Activated T-helper 1 cell treated with anti-CD3 and anti-CD28 coated beads, Interleukin-12 subunit alpha, Interleukin-12 subunit beta, Interleukin-2, Interleukin-4 antibody, amounts not matched to agents 30 ng/mL and 10 ng/mL and 1 ng/mL, durations not matched to agents 14 hours and 24 hours and 36 hours (primary cell): ENCODE measurements at regions of chr6 and their contacts with region 1.

Region 1: DNA sequence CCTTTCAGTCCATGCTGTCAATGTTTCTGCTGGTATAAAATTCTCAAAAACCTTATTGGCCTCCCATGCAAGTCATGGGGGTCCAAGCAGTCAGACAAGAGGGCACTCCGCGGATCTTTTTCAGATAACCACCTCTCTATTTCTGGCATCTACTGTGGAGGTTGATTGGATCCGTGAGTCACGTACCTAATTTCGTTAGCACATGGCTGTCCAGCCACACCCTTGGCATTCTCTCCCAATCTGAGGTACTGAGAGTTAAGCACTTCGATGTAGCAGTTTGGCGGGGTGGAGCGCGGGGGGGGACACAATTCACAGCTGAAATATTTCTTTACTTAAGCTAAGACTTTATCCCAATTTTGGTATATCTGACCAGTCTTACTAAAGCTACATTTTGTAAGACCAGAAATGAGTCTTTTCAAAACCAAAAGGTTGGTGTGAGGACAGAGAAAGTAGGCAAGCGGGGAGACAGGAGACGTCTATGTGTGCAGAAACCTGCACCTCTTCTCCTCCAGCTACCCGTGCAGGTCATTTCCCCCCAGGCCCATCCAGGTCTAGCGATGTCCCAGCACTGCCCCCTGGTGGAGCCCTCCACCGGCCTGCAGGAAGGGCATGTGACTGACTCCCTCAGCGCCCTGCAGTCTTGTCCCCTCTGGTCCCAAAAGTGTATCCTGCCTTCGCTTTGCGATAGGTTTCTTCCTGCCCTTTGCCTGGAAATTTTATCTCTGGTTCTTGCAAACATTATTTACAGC is 113.1 kb downstream of the ADAT2 start:
- DNase-seq: peak; percentile 14
- H3K4me3 Mint-ChIP-seq: no peak overlapping the region
- H3K27ac Mint-ChIP-seq: no peak overlapping the region
- H3K4me1 Mint-ChIP-seq: peaks cover 4% of the 10 kb centered on the region
- H3K27me3 Mint-ChIP-seq: no peaks in the 10 kb centered on the region

Region 2: GRCh38 chr6:143232849-143233248 is 104.5 kb before region 1 on chr6:
- intact Hi-C with region 1: loop called (anchors 10 kb)
- DNase-seq: peak; percentile 4
- H3K4me3 Mint-ChIP-seq: no peak overlapping the region
- H3K27ac Mint-ChIP-seq: no peak overlapping the region
- H3K4me1 Mint-ChIP-seq: no peaks in the 10 kb centered on the region
- H3K27me3 Mint-ChIP-seq: no peaks in the 10 kb centered on the region

Region 3: DNA sequence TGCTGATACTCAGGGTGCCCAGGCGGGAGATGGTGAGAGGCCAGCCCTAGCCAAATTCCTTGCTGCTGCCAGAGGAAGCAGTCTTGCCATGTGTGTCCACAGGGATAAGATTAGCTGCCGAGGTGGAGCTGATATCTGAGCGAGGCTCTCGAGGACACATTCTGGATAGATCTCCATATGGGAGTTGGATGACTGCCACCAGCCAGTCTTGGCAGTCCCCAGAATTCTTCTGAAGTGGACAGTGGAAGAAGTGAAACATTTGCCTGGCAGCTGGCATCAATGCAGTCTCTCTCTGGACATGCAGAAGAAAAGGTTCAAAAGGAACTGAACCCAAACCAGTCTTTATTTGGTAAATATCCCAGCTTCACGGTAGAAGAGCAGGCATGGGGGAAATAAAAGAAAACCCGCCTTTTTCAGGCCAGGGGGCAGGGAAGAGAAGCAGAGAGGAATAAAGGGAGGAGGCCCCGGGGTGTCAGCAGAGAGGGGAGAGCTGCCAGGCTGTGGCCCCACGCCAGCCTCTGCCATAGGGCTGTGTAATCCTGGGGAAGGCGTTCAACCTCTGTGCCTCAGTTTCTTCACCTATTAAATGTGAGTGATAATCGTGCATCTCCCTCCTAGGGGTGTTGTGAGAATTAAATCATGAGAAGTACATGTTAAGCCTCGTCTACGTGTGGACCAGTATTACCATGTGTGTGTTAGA is 177.8 kb after region 1 on chr6:
- intact Hi-C with region 1: no loop called
- DNase-seq: no peak
- H3K4me3 Mint-ChIP-seq: no peak overlapping the region
- H3K27ac Mint-ChIP-seq: no peak overlapping the region
- H3K4me1 Mint-ChIP-seq: peaks cover 37% of the 10 kb centered on the region
- H3K27me3 Mint-ChIP-seq: peaks cover 2% of the 10 kb centered on the region

Region 4: GRCh38 chr6:143525356-143525755 is 188.0 kb after region 1 on chr6:
- intact Hi-C with region 1: no loop called
- DNase-seq: no peak
- H3K4me3 Mint-ChIP-seq: no peak overlapping the region
- H3K27ac Mint-ChIP-seq: no peak overlapping the region
- H3K4me1 Mint-ChIP-seq: peaks cover 23% of the 10 kb centered on the region
- H3K27me3 Mint-ChIP-seq: no peaks in the 10 kb centered on the region